ENCODE measurements at regions of chr11 and their contacts with region 1.

Region 1: DNA sequence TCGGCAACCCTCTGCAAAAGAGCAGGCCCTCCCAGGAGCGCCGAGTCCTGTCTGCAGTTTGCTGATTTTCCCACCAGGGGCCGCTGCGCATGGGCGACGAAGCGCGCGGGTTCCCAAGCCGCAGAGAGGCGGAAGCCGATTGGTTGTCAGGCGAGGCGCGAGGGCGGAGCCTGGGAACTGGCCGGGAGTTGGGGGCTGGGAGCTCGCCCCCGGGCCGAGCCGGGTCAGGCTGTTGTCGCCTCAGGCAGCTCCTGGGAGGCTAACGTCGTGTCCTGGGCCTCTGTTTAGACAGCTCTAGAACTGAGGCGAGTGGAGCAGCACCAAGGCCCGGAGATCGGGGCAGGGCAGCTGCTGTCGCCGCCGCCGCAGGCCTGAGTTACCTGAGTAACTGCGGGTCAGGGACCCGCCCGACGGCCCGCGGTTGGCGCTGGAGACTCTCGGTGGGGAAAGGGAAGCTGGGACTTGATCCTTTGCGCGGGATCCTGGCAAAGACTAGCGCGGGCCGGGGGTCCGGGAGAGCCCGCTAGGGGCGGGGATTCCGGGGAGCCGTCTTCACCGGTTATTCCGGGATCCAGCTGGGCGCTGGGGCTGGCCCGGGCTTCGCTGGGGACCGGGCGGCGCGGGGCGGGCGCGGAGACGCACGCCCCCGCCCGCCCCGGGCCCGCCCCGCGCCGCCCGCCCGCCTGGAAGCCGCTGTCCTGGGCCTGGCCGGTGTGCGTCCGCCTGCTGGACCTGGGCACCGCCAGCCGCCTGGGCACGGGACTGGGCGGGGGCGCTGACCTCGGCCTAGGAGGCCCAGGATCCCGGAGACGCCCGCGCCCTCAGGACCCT is at the start of gene STIM1:
- DNase-seq: peak; percentile 90
- ATAC-seq: peak; percentile 93
- H3K4me3 ChIP-seq: peak within 1 kb of the TSS; percentile 83
- H3K27ac ChIP-seq: peak within 1 kb of the TSS; percentile 87
- H3K4me1 ChIP-seq: peaks cover 16% of the 10 kb centered on the region
- H3K27me3 ChIP-seq: no peaks in the 10 kb centered on the region
- CTCF ChIP-seq: peak; percentile 97
- POLR2A ChIP-seq: peak; percentile 40; the same call in 1 of the 2 replicates
- RAD21 ChIP-seq: peak; percentile 90
- total RNA-seq, gene STIM1: 13.9 and 17.9 TPM in 2 replicates

Region 2: DNA sequence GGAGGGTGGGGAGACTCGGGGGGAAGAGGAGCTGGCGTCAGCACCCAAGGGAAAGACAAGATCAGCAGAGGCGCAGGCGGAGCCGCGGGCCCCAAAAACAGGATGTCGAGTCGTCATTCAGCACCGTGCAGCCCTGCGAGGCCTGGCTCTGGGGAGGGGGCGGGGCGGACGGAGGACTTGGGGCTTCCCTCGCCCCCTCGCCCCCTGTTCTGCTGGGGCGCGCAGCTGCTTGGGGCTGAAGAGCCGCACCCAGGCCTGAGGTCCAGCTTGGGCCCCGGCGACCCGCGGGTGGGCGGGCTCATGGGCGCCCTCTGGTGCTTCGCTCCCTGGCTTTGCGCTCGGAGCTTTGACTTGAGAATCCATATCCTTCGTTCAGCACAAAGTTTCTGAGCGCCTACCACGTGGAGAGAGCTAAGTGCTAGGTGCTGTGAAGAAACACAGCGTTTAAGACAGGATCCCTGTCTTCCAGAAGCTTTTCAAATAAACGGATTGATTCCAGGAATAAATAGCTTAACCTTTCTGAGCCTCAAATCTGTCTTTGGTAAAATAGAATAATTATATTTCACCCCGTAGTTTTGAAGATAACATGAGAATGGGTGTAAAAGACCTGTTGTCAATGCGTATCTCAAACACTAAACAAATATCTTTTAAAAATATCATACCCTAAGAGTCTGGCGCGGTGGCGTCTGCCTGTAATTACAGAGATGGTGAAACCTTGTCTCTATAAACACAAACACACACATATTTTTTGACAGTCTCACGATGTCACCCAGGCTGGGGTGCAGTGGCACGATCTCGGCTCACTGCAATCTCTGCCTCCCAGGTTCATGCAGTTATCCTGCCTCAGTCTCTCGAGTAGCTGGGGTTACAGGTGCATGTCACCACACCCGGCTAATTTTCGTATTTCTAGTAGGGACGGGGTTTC is 13.5 kb before region 1 on chr11:
- CTCF ChIA-PET with region 1: interaction called, 20 read pairs
- POLR2A ChIA-PET with region 1: no interaction called
- dilution Hi-C with region 1: no loop called
- in situ Hi-C with region 1: no loop called
- intact Hi-C with region 1: no loop called
- DNase-seq: peak; percentile 82
- ATAC-seq: peak; percentile 76
- H3K4me3 ChIP-seq: peak overlapping the region; percentile 94
- H3K27ac ChIP-seq: peak overlapping the region; percentile 95
- H3K4me1 ChIP-seq: peaks cover 16% of the 10 kb centered on the region
- H3K27me3 ChIP-seq: no peaks in the 10 kb centered on the region
- CTCF ChIP-seq: peak; percentile 79
- POLR2A ChIP-seq: peak; percentile 57; the same call in 1 of the 2 replicates
- RAD21 ChIP-seq: peak; percentile 50

Region 3: DNA sequence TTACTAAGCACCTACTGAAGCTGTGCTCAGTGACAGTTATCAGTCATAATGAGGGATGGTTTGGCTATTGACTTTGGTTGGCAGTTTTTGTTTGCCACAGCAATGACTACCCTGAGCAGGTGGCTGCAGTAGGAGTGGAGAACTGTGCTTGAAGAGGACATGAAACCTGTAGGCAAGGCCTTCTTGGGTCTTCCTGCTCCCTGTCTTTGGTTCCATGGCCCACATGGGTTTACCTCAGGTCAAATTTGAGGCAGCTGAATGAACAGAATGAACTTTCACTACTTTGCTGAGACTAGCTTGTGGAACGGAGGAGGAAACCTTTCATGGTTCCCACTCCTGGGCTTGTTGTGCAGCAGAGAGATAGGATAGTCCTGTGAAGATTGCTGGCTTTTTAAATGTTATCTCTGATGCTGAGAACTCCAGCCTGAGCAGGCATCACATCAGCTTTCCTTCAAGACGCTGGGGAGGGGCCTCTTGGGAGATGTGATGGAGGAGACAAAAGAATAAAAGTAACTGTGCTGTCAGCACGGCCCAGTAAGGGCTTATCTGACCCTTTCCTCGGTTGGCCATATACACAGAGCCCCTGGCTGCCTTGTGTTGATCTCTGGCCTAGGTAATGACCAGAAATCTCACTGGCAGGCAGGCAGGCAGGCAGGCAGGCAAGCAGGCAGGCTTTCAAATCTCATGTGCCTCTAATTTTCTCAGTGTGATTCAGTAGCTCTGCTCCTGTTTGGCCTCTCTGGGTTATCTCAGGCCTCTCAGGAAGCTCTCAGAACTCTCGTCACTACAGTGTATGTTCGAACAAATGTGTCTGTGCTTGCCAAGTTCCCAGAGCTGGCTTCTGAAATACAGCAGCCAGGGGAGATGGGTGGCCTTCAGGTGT is 12.3 kb after region 1 on chr11:
- CTCF ChIA-PET with region 1: interaction called, 11 read pairs
- POLR2A ChIA-PET with region 1: interaction called, 8 read pairs
- dilution Hi-C with region 1: no loop called
- in situ Hi-C with region 1: no loop called
- intact Hi-C with region 1: no loop called
- DNase-seq: no peak
- ATAC-seq: 0 out of 2 replicates have a peak, but pooled peaks have one; percentile 28
- H3K4me3 ChIP-seq: no peak overlapping the region
- H3K27ac ChIP-seq: no peak overlapping the region
- H3K4me1 ChIP-seq: peaks cover 16% of the 10 kb centered on the region
- H3K27me3 ChIP-seq: no peaks in the 10 kb centered on the region
- CTCF ChIP-seq: no peak
- POLR2A ChIP-seq: no peak
- RAD21 ChIP-seq: no peak

Region 4: GRCh38 chr11:3942160-3942955 is 87.2 kb after region 1 on chr11:
- CTCF ChIA-PET with region 1: no interaction called
- POLR2A ChIA-PET with region 1: no interaction called
- dilution Hi-C with region 1: no loop called
- in situ Hi-C with region 1: no loop called
- intact Hi-C with region 1: loop called (anchors 5 kb)
- DNase-seq: no peak
- ATAC-seq: no peak
- H3K4me3 ChIP-seq: no peak overlapping the region
- H3K27ac ChIP-seq: no peak overlapping the region
- H3K4me1 ChIP-seq: peaks cover 27% of the 10 kb centered on the region
- H3K27me3 ChIP-seq: no peaks in the 10 kb centered on the region
- CTCF ChIP-seq: no peak
- POLR2A ChIP-seq: no peak
- RAD21 ChIP-seq: no peak

Region 5: DNA sequence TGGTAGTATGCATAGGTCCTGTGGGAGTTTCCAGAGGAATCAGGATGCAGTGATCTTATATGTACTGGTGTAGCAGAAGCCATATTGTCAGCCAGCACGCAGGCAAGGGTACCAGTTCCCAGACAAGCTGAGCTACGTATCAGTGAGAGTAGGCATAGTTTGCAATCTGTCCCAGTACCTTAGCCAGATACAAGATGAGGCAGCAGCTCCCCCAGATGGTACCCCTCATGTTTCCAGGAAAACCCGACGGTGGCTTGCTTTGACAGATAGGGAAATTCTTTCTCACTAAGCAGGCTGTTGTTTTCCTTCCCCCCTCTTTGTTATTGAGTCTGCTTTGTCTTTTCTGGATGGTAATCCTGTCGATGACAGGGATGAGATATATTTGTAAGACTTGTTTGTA is 129.7 kb after region 1 on chr11:
- CTCF ChIA-PET with region 1: no interaction called
- POLR2A ChIA-PET with region 1: no interaction called
- dilution Hi-C with region 1: no loop called
- in situ Hi-C with region 1: no loop called
- intact Hi-C with region 1: loop called (anchors 2 kb)
- DNase-seq: peak; percentile 17
- ATAC-seq: no peak
- H3K4me3 ChIP-seq: no peak overlapping the region
- H3K27ac ChIP-seq: no peak overlapping the region
- H3K4me1 ChIP-seq: peaks cover 3% of the 10 kb centered on the region; the same call in 1 of the 2 replicates
- H3K27me3 ChIP-seq: no peaks in the 10 kb centered on the region
- CTCF ChIP-seq: peak; percentile 29
- POLR2A ChIP-seq: no peak
- RAD21 ChIP-seq: peak; percentile 38

Measured in IMR-90 (cell line).